Tibial artery (tissue), 4 donors: ENCODE measurements at regions of chr10 and their contacts with region 1.

Region 1: DNA sequence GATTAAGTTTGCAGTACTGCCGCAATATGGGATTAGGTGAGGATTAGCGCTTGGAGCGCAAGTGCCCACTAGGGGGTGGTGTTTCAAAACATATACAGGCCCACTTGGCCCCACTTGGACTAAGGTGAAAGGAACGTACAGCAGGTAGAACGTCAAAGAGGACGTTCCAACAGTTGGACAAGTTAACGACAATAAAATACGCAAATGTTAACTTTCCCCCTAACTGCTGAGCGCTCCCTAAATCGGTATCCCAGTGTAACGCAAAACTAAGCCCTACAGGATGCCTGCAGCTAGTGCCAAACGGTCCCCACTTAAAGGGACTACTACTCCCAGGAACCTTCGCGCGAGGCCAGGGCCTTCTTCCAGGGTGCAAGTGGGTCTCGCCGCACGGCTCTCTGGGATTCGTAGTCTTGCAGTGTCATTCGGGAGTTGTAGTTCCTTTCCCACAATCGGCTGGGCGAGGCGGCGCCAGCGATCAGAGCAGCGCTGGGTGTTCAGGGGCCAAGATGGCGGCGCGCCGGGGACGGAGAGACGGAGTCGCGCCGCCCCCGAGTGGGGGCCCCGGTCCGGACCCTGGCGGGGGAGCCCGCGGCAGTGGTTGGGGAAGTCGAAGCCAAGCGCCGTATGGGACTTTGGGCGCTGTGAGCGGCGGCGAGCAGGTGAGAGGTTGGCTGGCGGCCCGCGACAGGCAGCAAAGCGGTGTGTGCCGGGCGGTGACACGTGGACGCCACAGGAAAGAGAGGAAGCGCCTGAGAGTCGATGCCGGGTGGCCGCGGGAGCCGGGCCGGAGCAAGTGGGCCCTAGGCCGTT is at the start of gene PPRC1:
- DNase-seq: peak; percentile 99 to 100
- H3K4me3 ChIP-seq: peak within 1 kb of the TSS; percentile 80 to 99
- H3K27ac ChIP-seq: peak within 1 kb of the TSS; percentile 90 to 94
- H3K4me1 ChIP-seq: peaks cover 0 to 33% (median 22%) of the 10 kb centered on the region in 4 donors
- H3K27me3 ChIP-seq: no peaks in the 10 kb centered on the region
- CTCF ChIP-seq: peak; percentile 89 to 94

Region 2: DNA sequence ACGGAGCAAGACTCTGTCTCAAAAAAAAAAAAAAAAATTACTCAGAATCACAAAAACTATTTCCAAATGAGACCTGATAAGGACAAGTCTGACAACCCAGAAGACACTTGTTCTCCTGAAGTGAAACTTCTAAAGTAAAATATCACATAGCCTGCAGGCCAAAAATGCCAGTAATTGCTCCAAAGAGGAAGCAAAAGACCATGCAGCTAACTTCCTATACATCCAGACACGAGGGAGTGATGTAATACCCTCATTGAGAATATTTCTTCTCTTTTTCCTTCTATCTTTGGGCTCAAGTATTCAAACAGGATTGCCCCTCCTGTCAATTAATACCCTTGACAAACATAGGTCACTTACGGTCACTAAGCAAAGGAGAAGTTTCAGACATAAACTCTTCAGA is 108.0 kb before region 1 on chr10:
- intact Hi-C with region 1: no loop called
- DNase-seq: no peak
- H3K4me3 ChIP-seq: no peak overlapping the region
- H3K27ac ChIP-seq: no peak overlapping the region
- H3K4me1 ChIP-seq: no peaks in the 10 kb centered on the region
- H3K27me3 ChIP-seq: no peaks in the 10 kb centered on the region
- CTCF ChIP-seq: no peak

Region 3: DNA sequence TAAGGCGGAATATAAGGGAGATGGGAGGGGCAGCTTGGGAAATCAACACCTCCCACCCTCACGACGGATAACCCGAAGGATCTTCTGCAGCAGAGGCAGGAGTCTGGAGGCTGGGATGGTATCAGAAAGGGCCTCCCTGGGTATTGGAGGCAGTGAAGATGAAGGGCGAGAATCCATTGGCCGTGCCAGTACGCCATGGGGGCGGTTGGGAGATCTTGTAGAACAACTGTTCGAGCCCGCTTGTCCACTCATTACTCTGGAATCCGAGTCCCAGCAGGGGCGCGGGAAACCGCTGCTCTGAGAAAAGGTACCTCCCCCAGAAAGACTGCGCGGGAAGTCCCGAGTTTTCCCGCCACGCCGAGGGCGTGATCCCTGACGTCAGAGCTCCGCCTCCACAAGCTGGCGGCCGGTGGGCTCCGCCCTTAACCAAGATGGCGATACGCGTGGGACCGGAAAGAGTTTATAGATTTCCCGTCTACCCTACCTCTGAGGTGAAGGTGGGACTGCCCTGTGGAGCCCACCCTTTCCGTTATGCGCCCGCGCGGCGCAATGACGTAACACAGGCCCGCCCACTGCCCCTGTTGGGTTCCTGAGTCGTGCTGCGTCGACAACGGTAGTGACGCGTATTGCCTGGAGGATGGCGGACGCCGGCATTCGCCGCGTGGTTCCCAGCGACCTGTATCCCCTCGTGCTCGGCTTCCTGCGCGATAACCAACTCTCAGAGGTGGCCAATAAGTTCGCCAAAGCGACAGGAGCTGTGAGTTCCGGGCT is 19.2 kb after region 1 on chr10 and contains the start of gene NOLC1:
- intact Hi-C with region 1: loop called (anchors 1 kb)
- DNase-seq: peak; percentile 99 to 100
- H3K4me3 ChIP-seq: peak within 1 kb of the TSS; percentile 64 to 75
- H3K27ac ChIP-seq: peak within 1 kb of the TSS; percentile 78 to 89
- H3K4me1 ChIP-seq: peaks cover 5 to 26% (median 15%) of the 10 kb centered on the region in 4 donors
- H3K27me3 ChIP-seq: no peaks in the 10 kb centered on the region
- CTCF ChIP-seq: no peak